Psoas muscle (tissue), 8 donors: ENCODE measurements at regions of chr3 and their contacts with region 1.

Region 1: GRCh38 chr3:137105277-137105977 is 147.6 kb downstream of the IL20RB start:
- DNase-seq: no peak
- ATAC-seq: peak in 1 of 4 donors; percentile 61
- H3K4me3 ChIP-seq: no peak overlapping the region
- H3K27ac ChIP-seq: no peak overlapping the region
- H3K4me1 ChIP-seq: no peaks in the 10 kb centered on the region
- H3K27me3 ChIP-seq: peaks cover 0 to 8% (median 5%) of the 10 kb centered on the region in 3 donors
- CTCF ChIP-seq: peak; percentile 63

Region 2: GRCh38 chr3:137165117-137165806 is 59.8 kb after region 1 on chr3:
- intact Hi-C with region 1: no loop called
- DNase-seq: no peak
- ATAC-seq: no peak
- H3K4me3 ChIP-seq: no peak overlapping the region
- H3K27ac ChIP-seq: no peak overlapping the region
- H3K4me1 ChIP-seq: peaks cover 6% of the 10 kb centered on the region
- H3K27me3 ChIP-seq: no peaks in the 10 kb centered on the region
- CTCF ChIP-seq: no peak

Region 3: GRCh38 chr3:137792626-137793271 is 687.3 kb after region 1 on chr3:
- intact Hi-C with region 1: loop called in 1 of 2 experiments (anchors 10 kb)
- DNase-seq: no peak
- ATAC-seq: no peak
- H3K4me3 ChIP-seq: no peak overlapping the region
- H3K27ac ChIP-seq: no peak overlapping the region
- H3K4me1 ChIP-seq: no peaks in the 10 kb centered on the region
- H3K27me3 ChIP-seq: peaks cover 0 to 2% (median 0%) of the 10 kb centered on the region in 3 donors
- CTCF ChIP-seq: peak; percentile 23

Region 4: DNA sequence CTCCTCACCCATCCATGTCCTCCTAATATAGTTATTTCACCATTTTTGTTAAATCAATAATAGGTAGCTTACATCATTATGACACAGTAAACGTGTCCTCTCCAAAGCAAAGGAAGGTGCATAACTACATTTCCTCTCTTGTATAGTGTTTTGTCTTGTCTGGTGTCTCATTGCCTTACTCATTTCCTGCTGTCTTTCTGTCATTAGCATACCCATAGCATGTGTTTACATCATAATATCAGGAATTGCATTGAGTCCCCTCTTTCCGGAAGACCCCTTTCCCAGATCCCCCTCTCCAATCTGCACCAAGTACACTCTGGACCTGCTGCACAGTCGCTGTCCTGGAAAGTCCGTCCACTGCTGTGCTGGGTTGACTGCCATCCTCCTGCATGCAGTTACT is 706.6 kb after region 1 on chr3:
- intact Hi-C with region 1: no loop called
- DNase-seq: no peak
- ATAC-seq: no peak
- H3K4me3 ChIP-seq: no peak overlapping the region
- H3K27ac ChIP-seq: no peak overlapping the region
- H3K4me1 ChIP-seq: no peaks in the 10 kb centered on the region
- H3K27me3 ChIP-seq: no peaks in the 10 kb centered on the region
- CTCF ChIP-seq: no peak

Region 5: DNA sequence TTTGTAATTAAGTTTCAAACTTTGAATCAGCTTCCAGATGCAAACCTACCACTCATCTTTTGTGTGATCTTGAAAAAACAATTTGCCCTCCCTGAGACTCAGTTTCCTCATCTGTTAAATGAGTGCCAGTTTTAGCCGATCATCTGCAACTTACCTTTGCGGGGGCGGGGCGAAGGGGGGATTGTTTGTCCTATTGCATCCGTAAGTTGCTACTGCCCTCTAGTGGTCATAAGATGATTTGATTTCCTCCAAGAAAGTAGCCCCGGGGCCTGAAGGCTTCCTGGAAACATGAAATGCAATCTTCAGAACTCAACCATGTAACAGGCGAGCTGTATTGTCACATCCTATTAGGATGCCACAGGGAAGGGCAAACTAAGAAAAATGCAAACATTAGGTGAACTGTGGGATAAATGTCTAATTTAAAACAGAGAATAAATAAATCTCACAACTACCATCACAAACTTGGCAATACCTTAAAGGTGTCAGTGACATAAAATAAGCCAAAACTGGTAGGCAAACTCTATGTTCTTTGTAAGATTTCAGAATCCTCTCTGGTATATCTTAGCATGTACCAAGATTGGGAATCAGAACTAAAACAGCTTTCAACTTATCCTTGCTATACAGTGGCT is 841.0 kb after region 1 on chr3:
- intact Hi-C with region 1: loop called (anchors 5 to 10 kb)
- DNase-seq: peak in 1 of 2 donors; percentile 19
- ATAC-seq: no peak
- H3K4me3 ChIP-seq: no peak overlapping the region
- H3K27ac ChIP-seq: no peak overlapping the region
- H3K4me1 ChIP-seq: no peaks in the 10 kb centered on the region
- H3K27me3 ChIP-seq: no peaks in the 10 kb centered on the region
- CTCF ChIP-seq: peak; percentile 52

Region 6: DNA sequence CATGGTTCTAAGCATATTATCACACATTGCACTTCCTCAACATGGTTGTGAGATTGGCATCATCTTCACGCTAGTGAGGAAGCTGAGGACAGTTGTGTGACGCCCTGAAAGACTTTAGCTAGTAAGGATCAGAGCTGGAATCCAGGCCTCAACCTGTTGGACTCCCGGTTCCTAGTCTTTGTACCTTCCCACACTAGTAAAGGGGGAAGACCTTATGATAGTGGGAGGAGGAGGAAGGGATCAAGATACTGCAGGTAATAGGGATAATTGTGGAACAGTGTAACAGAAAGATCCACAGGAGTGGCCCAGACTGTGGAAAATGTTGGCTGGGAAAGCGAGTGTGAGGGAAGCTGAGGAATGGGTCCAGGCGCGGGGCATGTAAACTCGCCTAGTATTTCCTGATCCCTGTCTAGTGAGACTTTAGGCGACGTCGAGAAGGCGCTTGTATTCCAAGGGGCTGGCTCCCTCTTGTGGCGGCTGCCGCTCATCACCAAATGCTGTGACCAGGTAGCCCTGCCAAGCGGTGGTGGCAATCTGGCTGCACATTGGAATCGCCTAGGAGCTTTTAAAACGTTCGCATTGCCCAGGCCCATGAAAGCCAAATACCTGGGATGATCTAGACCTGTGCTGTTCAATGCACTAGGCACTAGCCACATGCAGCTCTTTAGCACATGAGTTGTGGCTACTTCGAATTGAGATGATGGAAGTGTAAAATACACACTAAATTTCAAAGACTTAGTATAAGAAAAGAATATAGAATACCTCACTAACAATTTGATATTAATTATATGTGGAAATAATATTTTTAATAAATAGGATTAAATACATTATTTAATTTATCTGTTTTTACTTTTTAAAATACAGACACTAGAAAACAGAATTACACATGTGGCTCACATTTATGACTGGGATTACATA is 865.7 kb after region 1 on chr3:
- intact Hi-C with region 1: loop called (anchors 5 kb)
- DNase-seq: peak; percentile 68 to 78
- ATAC-seq: peak in 3 of 4 donors; percentile 69 to 79 (median 71)
- H3K4me3 ChIP-seq: no peak overlapping the region
- H3K27ac ChIP-seq: no peak overlapping the region
- H3K4me1 ChIP-seq: no peaks in the 10 kb centered on the region
- H3K27me3 ChIP-seq: no peaks in the 10 kb centered on the region
- CTCF ChIP-seq: peak; percentile 67